ENCODE measurements at regions of chr12 and their contacts with region 1.

Region 1: DNA sequence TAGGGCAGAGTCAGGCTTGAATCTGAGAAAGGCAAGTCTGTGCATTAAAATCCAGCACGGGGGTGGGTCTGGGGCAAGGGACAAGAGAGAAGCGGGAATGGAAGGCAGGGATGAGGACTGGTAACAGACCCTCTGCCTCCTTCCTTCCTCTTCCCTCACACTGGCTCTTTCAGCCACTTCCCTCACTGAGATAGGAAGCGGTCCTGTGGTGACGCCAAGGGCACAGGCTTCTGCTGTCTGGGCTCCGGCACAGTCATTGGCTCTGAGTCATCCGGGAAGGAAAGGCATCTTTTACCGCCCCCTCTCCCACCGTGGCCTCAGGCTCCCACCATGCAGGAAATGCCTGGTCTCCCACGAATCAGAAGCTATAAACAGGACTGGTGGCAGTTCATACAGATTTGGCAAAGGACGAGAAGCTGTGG is 70.2 kb downstream of the ETV6 start:
- DNase-seq: peak; percentile 56
- H3K4me3 Mint-ChIP-seq: no peak overlapping the region
- H3K27ac Mint-ChIP-seq: no peak overlapping the region
- H3K4me1 Mint-ChIP-seq: peaks cover 35% of the 10 kb centered on the region
- H3K27me3 Mint-ChIP-seq: no peaks in the 10 kb centered on the region

Region 2: GRCh38 chr12:11695321-11695720 is 24.4 kb before region 1 on chr12:
- CTCF ChIA-PET with region 1: no interaction called
- intact Hi-C with region 1: loop called (anchors 1 kb)
- DNase-seq: no peak
- H3K4me3 Mint-ChIP-seq: no peak overlapping the region
- H3K27ac Mint-ChIP-seq: no peak overlapping the region
- H3K4me1 Mint-ChIP-seq: peaks cover 31% of the 10 kb centered on the region
- H3K27me3 Mint-ChIP-seq: no peaks in the 10 kb centered on the region

Region 3: DNA sequence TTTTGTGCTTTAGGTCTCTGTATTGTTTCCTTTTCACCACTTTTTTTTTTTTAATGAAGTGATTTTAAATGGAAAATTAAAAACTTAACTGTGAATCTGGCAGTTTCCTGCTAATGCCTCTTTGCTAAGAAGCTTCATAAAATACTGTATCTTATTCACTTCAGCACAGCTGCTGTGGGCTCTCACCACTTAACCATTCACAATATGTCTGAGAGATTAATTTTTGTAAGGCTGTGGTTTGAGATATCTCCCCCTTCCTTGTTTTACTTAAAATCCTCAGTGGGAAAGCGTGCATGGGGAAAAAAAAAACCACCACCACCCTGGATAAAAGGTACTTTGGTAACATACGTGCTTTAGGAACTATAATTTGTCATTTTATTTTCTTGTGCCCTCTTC is 45.7 kb after region 1 on chr12:
- CTCF ChIA-PET with region 1: no interaction called
- intact Hi-C with region 1: no loop called
- DNase-seq: peak; percentile 44
- H3K4me3 Mint-ChIP-seq: peak overlapping the region; percentile 43
- H3K27ac Mint-ChIP-seq: peak overlapping the region; percentile 92
- H3K4me1 Mint-ChIP-seq: peaks cover 93% of the 10 kb centered on the region
- H3K27me3 Mint-ChIP-seq: no peaks in the 10 kb centered on the region

Measured in activated naive CD4-positive, alpha-beta T cell treated with anti-CD3 and anti-CD28 coated beads for 36 hours (primary cell).